Dorsolateral prefrontal cortex (tissue), 120 donors: ENCODE measurements at regions of chr5 and their contacts with region 1.

Region 1: DNA sequence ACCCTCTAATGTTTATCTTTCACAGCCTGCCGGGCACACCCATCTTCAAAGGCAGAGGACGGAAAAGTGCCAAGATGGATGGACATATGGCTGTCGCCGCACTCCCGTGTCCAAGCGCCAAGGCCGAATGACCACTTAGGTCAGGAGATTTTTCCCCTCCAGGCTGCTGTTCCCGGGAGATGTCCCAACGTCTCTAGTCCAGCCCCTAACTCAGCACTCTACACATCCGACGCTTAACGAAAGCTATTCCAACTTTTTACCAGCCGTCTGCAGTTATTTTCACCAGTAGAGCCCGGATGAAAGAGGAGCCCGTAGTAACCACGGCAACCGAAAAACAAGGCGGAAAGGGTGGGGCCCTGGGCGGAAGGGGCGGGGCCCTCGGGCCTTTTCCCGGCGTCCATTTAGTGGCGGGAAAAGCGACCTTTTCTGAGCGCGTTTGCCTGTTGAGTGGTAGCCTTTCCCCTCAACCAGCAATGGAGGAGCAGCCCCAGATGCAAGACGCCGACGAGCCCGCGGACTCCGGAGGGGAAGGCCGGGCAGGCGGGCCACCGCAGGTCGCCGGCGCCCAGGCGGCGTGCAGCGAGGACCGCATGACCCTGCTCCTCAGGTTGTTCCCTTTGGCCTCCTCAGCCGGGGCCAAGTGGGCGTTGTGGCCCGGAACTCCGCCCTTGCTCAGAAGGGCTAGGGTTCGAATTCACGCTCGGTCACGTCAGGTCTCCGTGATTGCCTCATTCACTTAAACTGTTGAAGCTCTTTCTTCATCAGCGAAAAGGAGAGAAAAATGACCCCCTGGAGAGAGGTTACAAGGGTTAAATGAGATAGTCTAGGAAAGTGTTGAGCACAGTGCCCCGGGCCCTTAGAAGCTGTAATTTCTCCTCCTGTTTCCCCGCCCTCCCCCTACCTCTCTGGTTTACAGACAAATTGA is at the start of gene CENPH:
- DNase-seq: peak; percentile 77 to 92 (median 88)
- H3K4me3 ChIP-seq: peak within 1 kb of the TSS; percentile 54 to 100 (median 84)
- H3K27ac ChIP-seq: peak within 1 kb of the TSS in 46 of 59 donors; percentile 7 to 86 (median 64)
- H3K27me3 ChIP-seq: no peaks in the 10 kb centered on the region
- CTCF ChIP-seq: peak in 13 of 56 donors; percentile 7 to 40 (median 20)
- total RNA-seq, gene CENPH: 0.35 to 5.2 (median 2.2) TPM in 119 of 120 experiments, not detected in the other

Region 2: DNA sequence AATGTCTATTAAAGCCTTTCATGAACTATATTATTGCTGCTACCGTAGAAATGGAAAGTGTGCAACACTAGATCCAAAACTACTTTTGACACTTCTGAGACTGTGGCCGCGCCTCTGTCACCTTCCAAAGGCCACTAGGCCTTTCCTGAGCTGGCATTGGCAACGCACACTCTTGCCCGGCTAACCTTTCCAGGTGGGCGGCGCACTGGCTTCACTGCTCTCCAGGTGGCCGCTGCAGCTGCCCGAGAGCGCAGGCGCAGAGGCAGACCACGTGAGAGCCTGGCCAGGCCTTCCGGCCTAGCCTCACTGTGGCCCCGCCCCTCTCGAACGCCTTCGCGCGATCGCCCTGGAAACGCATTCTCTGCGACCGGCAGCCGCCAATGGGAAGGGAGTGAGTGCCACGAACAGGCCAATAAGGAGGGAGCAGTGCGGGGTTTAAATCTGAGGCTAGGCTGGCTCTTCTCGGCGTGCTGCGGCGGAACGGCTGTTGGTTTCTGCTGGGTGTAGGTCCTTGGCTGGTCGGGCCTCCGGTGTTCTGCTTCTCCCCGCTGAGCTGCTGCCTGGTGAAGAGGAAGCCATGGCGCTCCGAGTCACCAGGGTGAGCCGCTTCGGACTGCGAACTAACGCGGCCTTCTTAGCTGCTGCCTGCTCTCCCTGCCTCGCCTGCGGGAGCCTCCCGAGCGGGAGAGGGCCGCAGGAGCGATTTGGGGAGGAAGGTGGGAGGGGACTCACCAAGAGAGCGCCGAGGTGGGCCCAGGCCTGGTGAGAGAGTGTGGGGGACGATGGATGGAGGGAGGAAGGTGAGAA is 22.5 kb before region 1 on chr5 and contains the start of gene CCNB1:
- intact Hi-C with region 1: loop called (anchors 2 kb)
- DNase-seq: peak; percentile 95 to 99 (median 98)
- H3K4me3 ChIP-seq: peak within 1 kb of the TSS; percentile 54 to 99 (median 80)
- H3K27ac ChIP-seq: peak within 1 kb of the TSS in 44 of 59 donors; percentile 15 to 87 (median 60)
- H3K27me3 ChIP-seq: no peaks in the 10 kb centered on the region
- CTCF ChIP-seq: peak in 43 of 56 donors; percentile 6 to 63 (median 37)
- total RNA-seq, gene CCNB1: 5.0 to 23.5 (median 11.9) TPM